Lower leg skin (tissue), 4 donors: ENCODE measurements at regions of chr13 and their contacts with region 1.

Region 1: DNA sequence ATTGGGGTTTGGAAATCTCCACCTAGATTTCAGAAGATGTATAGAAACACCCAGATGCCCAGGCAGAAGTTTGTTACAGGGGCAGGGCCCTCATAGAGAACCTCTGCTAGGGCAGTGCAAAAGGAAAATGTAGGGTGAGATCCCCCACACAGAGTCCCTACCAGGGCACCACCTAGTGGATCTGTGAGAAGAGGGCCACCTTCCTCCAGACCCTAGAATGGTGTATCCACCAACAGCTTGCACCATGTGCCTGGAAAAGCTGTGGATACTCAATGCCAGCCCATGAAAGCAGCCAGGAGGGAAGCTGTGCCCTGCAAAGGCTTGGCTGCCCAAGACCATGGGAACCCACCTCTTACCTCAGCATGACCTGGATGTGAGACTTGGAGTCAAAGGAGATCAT is 32.5 kb downstream of the TRPC4 start:
- DNase-seq: no peak
- H3K4me3 ChIP-seq: no peak overlapping the region
- CTCF ChIP-seq: no peak
- POLR2A ChIP-seq: no peak

Region 2: DNA sequence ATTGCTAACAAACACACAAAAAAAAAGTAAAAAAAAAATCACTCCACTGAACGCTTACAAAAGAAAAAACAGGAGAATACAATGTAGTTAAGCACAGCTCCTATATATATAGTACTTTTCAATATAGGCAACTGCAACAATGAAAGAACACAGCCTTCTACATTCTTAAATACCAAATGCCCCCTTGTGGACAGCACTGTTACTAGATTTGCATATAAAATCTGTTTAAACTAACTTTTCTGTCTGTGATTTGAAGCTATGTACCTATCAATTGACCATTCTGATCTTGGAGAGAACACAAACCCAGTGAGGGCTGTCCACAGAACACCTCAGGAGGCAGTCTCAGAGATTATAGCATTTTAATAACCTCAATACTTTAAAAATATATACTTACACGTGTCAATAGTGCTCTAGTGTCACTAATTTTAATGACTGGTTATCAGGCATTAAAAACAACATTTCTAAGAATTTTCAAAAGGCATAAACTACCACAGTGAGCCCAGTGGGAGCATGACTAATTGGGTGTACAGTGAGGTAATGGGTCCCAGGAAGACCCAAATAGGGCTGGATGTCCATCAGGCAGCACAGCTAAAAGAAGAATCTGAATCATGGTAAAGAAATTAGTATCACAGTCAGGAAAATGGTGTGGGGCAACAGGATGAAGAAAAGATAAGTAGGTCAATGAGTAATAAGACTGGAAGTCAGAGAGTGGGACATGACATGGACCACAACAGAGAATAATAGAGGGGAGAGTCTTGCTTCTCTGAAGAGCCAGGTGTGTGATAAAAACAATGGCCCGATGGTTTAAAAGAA is 1561.7 kb before region 1 on chr13:
- intact Hi-C with region 1: no loop called
- DNase-seq: no peak
- H3K4me3 ChIP-seq: no peak overlapping the region
- CTCF ChIP-seq: no peak
- POLR2A ChIP-seq: no peak

Region 3: DNA sequence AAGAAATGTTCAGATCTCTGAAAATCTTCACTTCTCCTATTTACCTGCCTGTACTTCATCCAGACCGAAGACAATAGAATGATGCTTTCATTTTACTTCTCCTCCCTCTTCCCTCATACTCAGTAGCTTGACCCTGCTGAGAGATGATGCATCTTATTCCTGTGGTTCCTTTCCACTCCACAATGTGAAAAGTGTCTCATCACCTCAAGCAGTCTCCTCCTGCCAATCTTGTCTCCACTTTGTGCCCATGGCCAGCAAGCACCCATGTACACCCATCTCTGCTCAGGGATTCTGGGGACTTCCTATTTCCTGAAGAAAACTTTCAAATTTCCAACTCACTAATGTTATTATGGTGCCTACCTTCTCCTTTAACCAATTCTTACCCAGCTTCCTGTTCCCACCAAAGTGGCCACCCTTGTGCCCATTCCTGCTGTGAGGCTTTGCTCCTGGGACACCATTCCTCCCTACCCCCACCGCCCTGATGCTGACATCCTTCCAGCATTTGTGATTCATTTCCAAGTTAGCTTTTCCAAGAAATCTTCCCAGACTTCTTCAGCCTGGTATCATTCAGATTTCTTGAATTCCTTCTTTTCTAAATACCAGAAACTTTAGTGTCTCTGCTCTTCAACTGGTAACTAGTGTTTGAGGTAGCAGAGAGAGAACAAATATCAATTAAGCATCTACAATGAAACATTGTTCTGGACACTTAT is 451.0 kb before region 1 on chr13:
- intact Hi-C with region 1: no loop called
- DNase-seq: no peak
- H3K4me3 ChIP-seq: no peak overlapping the region
- CTCF ChIP-seq: no peak
- POLR2A ChIP-seq: no peak

Region 4: DNA sequence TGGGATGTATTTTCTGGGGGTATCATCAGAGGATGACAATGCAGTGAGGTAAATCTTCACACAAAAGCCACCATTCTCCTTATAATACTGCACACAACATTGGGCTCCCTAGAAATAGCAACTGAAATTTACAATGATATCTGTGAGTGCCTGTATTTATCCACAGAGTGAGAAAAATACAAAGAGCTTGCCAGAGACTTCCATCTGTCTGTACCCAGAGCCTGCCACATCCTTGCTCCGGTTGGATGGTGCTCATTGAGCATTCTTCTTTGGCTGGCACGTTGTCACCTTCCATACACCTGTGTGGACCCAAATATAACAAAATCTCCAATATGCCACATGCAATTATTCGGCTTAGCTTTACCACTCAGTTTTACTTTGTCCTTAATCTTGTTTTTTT is 323.0 kb after region 1 on chr13:
- intact Hi-C with region 1: no loop called
- DNase-seq: no peak
- H3K4me3 ChIP-seq: no peak overlapping the region
- CTCF ChIP-seq: no peak
- POLR2A ChIP-seq: no peak

Region 5: GRCh38 chr13:38239874-38240273 is 402.8 kb after region 1 on chr13:
- intact Hi-C with region 1: no loop called
- DNase-seq: no peak
- H3K4me3 ChIP-seq: no peak overlapping the region
- CTCF ChIP-seq: no peak
- POLR2A ChIP-seq: no peak

Region 6: GRCh38 chr13:38718374-38718773 is 881.3 kb after region 1 on chr13:
- intact Hi-C with region 1: loop called (anchors 5 kb)
- DNase-seq: no peak
- H3K4me3 ChIP-seq: no peak overlapping the region
- CTCF ChIP-seq: no peak
- POLR2A ChIP-seq: no peak